IMR-90 (cell line): ENCODE measurements at regions of chr11 and their contacts with region 1.

Region 1: GRCh38 chr11:45859661-45860140 is 12.4 kb downstream of the CRY2 start:
- DNase-seq: peak; percentile 99
- ATAC-seq: peak; percentile 91
- H3K4me3 ChIP-seq: no peak overlapping the region
- H3K27ac ChIP-seq: peak overlapping the region; percentile 75
- H3K4me1 ChIP-seq: peaks cover 31% of the 10 kb centered on the region
- H3K27me3 ChIP-seq: no peaks in the 10 kb centered on the region
- CTCF ChIP-seq: no peak
- POLR2A ChIP-seq: peak; percentile 61; the same call in 1 of the 2 replicates
- RAD21 ChIP-seq: peak; percentile 7; the same call in 1 of the 2 replicates

Region 2: GRCh38 chr11:45610627-45611026 is 249.1 kb before region 1 on chr11:
- CTCF ChIA-PET with region 1: no interaction called
- POLR2A ChIA-PET with region 1: no interaction called
- dilution Hi-C with region 1: no loop called
- in situ Hi-C with region 1: no loop called
- intact Hi-C with region 1: no loop called
- DNase-seq: no peak
- ATAC-seq: no peak
- H3K4me3 ChIP-seq: no peak overlapping the region
- H3K27ac ChIP-seq: no peak overlapping the region
- H3K4me1 ChIP-seq: no peaks in the 10 kb centered on the region
- H3K27me3 ChIP-seq: peaks cover 1% of the 10 kb centered on the region; the same call in 1 of the 2 replicates
- CTCF ChIP-seq: no peak
- POLR2A ChIP-seq: no peak
- RAD21 ChIP-seq: no peak

Region 3: DNA sequence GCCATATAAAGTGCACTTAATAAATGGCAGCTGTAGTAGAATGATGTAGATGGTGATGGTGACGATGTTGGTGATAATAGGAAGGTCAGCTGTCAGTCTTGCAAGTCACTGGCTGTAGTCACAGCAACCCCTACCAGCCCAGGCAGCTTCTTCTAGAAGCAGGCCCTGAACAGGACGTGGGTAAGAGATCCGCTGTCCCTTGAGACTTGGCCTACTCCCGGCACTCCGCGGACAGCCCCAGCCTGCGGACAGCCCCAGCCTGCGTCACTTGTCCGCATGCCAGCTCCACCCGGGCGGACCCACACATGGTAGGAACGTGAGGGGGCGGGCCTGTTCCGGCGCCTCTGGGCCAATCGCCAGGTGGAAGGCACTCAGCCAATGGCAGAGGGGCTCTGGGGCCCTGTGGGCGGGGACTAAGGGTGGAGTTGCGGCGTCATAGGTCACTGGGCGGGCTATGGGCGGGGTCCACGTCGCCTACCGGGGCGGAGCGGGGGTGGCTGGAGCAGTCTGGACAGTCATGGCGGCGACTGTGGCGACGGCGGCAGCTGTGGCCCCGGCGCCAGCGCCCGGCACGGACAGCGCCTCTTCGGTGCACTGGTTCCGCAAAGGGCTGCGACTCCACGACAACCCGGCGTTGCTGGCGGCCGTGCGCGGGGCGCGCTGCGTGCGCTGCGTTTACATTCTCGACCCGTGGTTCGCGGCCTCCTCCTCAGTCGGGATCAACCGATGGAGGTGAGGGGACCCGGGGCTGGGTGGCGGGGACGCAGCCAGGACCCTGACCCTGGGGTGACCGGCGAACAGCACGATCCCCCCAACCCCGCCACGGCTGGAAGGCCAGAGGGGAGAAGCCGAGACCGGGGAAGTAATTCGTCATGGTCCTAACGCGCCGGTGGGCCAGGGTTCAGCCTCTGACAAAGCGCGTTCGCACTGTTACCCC is 12.5 kb before region 1 on chr11 and contains the start of gene CRY2:
- CTCF ChIA-PET with region 1: interaction called, 6 read pairs
- POLR2A ChIA-PET with region 1: interaction called, 5 read pairs
- dilution Hi-C with region 1: no loop called
- in situ Hi-C with region 1: no loop called
- intact Hi-C with region 1: loop called (anchors 1 kb)
- DNase-seq: peak; percentile 96
- ATAC-seq: peak; percentile 97
- H3K4me3 ChIP-seq: peak within 1 kb of the TSS; percentile 97
- H3K27ac ChIP-seq: peak within 1 kb of the TSS; percentile 90
- H3K4me1 ChIP-seq: peaks cover 8% of the 10 kb centered on the region
- H3K27me3 ChIP-seq: no peaks in the 10 kb centered on the region
- CTCF ChIP-seq: no peak
- POLR2A ChIP-seq: peak; percentile 97
- RAD21 ChIP-seq: peak; percentile 15; the same call in 1 of the 2 replicates
- total RNA-seq, gene CRY2: 12.8 and 13.1 TPM in 2 replicates

Region 4: DNA sequence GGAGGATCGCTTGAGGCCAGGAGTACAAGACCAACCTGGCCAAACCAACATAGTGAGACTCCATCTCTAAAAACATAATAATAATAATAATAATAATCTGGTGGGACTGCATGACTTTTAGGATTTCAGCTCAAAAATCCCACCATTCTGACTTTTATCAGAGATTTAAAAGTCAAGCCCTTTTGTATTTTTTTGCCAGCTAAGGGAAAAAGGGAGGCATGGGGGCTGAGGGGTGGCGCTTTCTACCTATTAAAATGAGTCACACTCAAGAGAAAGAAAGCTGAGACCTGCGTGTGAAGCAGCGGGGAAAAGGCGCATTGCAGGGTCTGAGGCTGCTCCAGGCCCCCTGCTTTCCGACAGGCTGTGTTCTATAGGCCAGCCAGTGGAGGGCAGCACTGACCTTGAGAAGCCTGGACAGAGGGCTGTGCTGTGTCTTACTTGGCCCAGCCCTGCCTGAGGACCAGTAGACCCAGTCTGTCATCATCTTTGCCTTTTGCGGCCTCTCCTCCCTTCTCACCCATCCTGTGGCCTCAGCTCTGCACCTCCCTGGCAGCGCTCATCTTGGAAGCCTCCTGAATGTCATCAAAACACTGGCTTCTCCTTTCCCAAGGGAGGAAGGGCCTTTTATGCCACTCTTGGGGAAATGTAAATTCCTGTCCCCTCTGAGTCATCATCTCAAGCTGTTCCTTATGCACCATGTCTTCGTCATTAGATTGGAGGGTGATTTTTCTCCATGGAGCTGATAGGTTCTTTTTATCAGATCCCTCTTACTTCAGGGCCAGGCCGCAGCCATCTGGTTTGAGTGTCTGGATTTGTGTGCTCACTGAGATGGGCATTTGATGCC is 13.0 kb after region 1 on chr11:
- CTCF ChIA-PET with region 1: interaction called, 26 read pairs
- POLR2A ChIA-PET with region 1: no interaction called
- dilution Hi-C with region 1: no loop called
- in situ Hi-C with region 1: no loop called
- intact Hi-C with region 1: no loop called
- DNase-seq: peak; percentile 95
- ATAC-seq: peak; percentile 98
- H3K4me3 ChIP-seq: no peak overlapping the region
- H3K27ac ChIP-seq: no peak overlapping the region
- H3K4me1 ChIP-seq: peaks cover 5% of the 10 kb centered on the region
- H3K27me3 ChIP-seq: no peaks in the 10 kb centered on the region
- CTCF ChIP-seq: peak; percentile 81
- POLR2A ChIP-seq: no peak
- RAD21 ChIP-seq: peak; percentile 82